ENCODE measurements at regions of chr4 and their contacts with region 1.

Region 1: DNA sequence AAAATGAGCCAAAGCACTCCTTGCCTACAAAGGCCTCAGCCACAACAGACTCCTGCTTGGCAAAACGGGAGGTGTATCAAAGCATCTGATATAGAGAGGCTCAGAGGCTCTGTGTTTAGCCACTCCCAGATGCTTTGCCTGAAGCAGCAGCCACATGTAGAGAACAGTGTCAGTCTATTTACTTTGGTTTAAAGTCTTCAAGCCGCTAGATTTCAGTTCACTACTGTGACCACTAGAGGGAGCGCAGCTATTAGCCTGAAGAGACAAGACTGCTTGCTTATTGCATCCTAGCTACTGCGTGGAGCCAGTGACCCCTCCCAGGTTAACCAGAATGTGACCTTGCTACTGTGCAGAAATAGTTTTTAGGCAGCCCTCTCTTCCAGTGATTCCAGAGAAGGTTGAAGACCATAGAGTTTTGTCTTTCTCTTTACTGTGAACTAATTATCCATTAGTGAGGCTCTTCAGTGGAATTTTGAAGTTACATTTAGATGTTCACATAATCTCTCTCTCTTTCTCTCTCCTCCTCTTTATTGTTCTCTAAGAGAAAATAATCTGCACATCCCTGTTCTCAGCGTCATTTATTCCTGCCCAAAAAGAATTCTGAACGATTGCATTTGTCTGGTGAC is 39.3 kb downstream of the BMP3 start:
- DNase-seq: peak; percentile 42 to 61
- H3K4me3 ChIP-seq: no peak overlapping the region
- H3K27ac ChIP-seq: no peak overlapping the region
- H3K4me1 ChIP-seq: no peaks in the 10 kb centered on the region
- H3K27me3 ChIP-seq: no peaks in the 10 kb centered on the region
- CTCF ChIP-seq: peak; percentile 84

Region 2: DNA sequence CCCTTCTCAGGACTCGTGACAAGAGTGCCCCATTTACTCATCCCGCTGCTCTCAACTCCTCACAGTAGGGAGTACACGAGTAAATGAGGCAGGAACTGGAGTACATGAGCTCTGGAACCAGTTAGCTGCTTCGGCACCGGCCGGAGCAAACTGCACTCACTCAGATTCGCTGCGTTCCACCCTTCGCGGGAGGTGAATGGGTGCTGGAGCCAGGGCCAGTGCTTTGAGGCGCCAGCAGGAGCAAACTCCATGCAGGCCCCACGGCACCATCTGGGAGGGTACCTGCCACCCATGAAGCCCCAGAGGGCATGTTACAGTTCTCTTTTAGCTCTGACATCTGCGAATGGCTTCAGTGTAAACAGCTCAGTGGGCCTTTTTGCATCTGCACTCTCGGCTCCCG is 1346.3 kb before region 1 on chr4:
- CTCF ChIA-PET with region 1: no interaction called
- POLR2A ChIA-PET with region 1: no interaction called
- intact Hi-C with region 1: no loop called
- DNase-seq: no peak
- H3K4me3 ChIP-seq: no peak overlapping the region
- H3K27ac ChIP-seq: no peak overlapping the region
- H3K4me1 ChIP-seq: no peaks in the 10 kb centered on the region
- H3K27me3 ChIP-seq: no peaks in the 10 kb centered on the region
- CTCF ChIP-seq: no peak

Region 3: DNA sequence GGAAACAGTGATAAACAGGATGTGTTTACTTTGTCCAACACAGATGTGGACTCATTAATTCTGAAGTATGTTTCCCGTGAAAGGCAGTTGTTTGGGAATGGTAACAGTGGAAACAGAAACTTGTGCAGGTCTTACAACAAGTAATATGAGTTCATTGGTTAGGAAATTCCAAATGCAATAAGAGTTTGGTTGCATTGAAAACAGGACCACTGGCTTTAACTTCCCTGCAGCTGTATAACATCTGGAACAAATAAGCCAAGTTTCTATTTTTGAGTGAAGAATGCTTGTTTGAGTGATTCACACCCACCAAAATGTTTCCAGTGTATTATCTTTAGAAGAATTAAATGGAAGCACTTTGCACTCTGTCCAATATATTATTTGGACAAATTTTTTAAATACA is 121.7 kb before region 1 on chr4:
- CTCF ChIA-PET with region 1: no interaction called
- POLR2A ChIA-PET with region 1: no interaction called
- intact Hi-C with region 1: no loop called
- DNase-seq: no peak
- H3K4me3 ChIP-seq: no peak overlapping the region
- H3K27ac ChIP-seq: no peak overlapping the region
- H3K4me1 ChIP-seq: no peaks in the 10 kb centered on the region
- H3K27me3 ChIP-seq: no peaks in the 10 kb centered on the region
- CTCF ChIP-seq: no peak

Region 4: DNA sequence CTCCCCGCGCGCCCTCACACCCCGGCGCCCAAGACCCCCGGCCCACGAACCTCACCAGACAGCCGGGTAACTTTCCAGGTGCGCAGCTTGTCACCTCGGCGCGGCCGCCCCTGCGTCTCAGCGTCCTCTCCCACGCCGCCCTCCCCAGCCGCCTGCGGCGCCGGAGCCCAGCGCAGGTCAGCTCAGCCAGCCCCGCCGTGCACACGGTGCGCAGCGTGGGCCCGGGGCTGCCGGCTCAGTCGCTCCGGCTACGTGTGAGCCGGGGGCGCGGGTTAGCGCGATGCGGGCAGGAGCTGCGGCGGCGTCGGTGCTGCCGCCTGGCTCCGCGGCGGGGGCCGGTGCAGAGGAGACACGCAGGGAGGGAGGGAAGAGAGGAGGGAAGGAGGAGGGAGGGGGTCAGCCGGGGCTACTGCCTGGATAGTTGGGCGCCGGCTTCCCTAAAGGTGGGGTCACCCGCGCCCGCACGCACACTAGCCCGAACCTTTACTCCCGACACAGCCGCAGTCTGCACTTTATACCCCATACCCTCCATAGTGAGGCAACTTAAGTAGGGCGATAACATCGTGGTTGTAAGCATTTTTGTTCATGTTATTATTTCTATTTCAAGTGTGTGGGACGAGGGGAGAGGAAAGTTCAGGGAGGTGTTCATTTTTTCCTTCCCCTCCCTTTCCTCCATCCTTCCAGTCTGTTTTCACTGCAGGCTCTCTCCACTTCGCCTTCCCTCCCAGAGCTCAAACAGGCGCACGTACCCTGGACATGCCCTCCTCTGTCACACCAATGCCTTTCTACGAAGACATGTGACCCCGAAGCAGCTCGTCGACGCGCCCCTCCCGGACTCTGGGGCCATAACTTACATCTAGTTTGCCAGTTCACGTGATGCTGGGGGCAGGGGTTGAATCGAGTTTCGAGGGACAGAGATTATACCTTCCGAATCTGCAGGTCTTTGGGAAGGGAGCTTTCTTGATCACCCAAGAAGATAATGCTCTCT is 145.4 kb after region 1 on chr4 and contains the start of gene PRKG2:
- CTCF ChIA-PET with region 1: no interaction called
- POLR2A ChIA-PET with region 1: no interaction called
- intact Hi-C with region 1: loop called (anchors 5 kb)
- DNase-seq: no peak
- H3K4me3 ChIP-seq: no peak within 1 kb of the TSS
- H3K27ac ChIP-seq: no peak within 1 kb of the TSS
- H3K4me1 ChIP-seq: no peaks in the 10 kb centered on the region
- H3K27me3 ChIP-seq: no peaks in the 10 kb centered on the region
- CTCF ChIP-seq: no peak
- total RNA-seq, gene PRKG2: not detected in 2 replicates

Region 5: GRCh38 chr4:81351654-81352445 is 282.0 kb after region 1 on chr4:
- CTCF ChIA-PET with region 1: interaction called, 5 read pairs
- POLR2A ChIA-PET with region 1: no interaction called
- intact Hi-C with region 1: loop called (anchors 1 kb)
- DNase-seq: peak in 1 of 2 experiments; percentile 43
- H3K4me3 ChIP-seq: no peak overlapping the region
- H3K27ac ChIP-seq: no peak overlapping the region
- H3K4me1 ChIP-seq: no peaks in the 10 kb centered on the region
- H3K27me3 ChIP-seq: no peaks in the 10 kb centered on the region
- CTCF ChIP-seq: peak; percentile 84